ENCODE measurements at regions of chr1 and their contacts with region 1.

Region 1: GRCh38 chr1:197173571-197174482 is 27.4 kb upstream of the ASPM start:
- DNase-seq: no peak
- H3K4me3 ChIP-seq: no peak overlapping the region
- H3K27ac ChIP-seq: no peak overlapping the region
- H3K4me1 ChIP-seq: peaks cover 3% of the 10 kb centered on the region
- H3K27me3 ChIP-seq: no peaks in the 10 kb centered on the region
- CTCF ChIP-seq: no peak
- POLR2A ChIP-seq: no peak

Region 2: DNA sequence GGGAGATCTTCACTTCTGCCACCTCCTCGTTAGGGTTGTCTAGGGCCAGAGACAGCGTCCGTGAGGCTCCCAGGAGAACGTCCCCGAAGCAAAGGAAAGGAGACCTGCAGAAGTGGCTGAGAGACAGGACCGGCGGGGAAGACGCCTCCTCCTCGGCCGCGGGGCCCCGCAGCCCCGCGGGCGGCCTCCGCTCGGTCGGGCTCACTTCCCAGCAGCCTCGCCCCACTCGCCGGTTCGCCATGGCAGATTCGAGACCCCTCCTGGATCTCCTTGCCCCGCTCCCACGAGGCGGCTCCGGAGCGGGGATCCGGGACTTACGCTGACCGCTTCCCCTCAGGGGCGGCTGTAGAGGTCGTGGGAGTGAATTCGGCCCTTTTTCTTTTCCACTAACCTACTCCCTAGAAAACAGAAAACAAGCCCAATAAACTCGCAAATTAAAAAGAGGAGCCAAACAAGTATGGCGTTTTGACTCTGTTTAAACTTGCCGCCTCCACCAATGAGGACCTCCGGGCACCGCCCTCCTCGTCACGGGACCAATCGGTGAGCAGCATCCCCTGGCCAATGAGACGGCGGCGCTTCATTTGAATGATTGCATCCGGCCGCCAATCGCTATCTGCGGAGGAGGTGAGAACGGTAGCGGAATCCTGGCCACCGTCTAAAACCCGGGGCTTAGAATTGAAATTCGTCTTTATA is 27.5 kb before region 1 on chr1 and contains the start of gene ASPM:
- CTCF ChIA-PET with region 1: interaction called, 17 read pairs
- POLR2A ChIA-PET with region 1: no interaction called
- dilution Hi-C with region 1: no loop called
- intact Hi-C with region 1: loop called (anchors 2 kb)
- DNase-seq: peak; percentile 96
- H3K4me3 ChIP-seq: peak within 1 kb of the TSS; percentile 63 to 88 (median 80)
- H3K27ac ChIP-seq: peak within 1 kb of the TSS; percentile 50
- H3K4me1 ChIP-seq: peaks cover 12% of the 10 kb centered on the region
- H3K27me3 ChIP-seq: no peaks in the 10 kb centered on the region
- CTCF ChIP-seq: no peak
- POLR2A ChIP-seq: peak; percentile 4
- total RNA-seq, gene ASPM: 44.6 and 55.1 TPM in 2 replicates

Region 3: DNA sequence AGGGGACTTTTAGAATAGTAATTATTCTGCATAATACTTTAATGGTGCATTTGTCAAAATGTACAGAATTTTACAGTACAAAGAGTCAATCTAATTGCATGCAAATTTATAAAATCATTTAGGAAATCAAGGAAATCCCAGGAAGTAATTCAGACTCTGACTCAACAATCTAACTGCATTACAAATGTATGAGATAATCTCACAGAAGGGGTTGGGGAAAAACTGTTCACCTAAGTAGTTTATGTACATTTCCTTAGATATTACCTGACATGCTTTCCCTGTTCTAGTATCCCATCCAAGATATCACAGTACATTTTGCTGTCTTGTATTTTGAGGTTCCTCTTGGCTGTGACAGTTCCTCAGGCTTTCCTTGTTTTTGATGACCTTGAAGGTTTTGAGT is 99.0 kb after region 1 on chr1:
- CTCF ChIA-PET with region 1: no interaction called
- POLR2A ChIA-PET with region 1: no interaction called
- dilution Hi-C with region 1: no loop called
- intact Hi-C with region 1: no loop called
- DNase-seq: no peak
- H3K4me3 ChIP-seq: no peak overlapping the region
- H3K27ac ChIP-seq: no peak overlapping the region
- H3K4me1 ChIP-seq: no peaks in the 10 kb centered on the region
- H3K27me3 ChIP-seq: peaks cover 0 to 6% of the 10 kb centered on the region in 2 experiments
- CTCF ChIP-seq: no peak
- POLR2A ChIP-seq: no peak